T-cell (primary cell): ENCODE measurements at regions of chr12 and their contacts with region 1.

Region 1: DNA sequence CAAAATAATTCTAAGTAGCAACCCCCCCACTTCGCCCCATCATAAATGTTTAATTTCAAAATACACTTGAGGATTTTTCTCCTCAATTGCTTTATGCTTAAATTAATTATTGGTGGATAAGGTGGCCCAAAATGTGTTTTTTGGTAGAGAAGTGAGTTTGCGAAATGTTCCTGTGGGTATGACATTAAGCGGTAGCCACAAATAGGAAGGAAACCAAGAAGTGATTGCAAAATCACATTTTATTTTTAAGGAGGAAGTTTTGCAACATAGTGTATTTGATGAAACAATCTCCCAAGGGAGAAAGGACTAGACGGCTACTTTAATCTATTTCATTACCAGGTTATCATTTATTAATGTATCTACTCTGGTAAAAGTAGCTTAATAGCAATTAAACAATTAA is 25.5 kb downstream of the SLC25A3 start:
- DNase-seq: no peak
- ATAC-seq: no peak
- H3K4me3 ChIP-seq: no peak overlapping the region
- H3K4me3 Mint-ChIP-seq: no peak overlapping the region
- H3K27ac ChIP-seq: no peak overlapping the region
- H3K27ac Mint-ChIP-seq: no peak overlapping the region
- H3K4me1 ChIP-seq: no peaks in the 10 kb centered on the region
- H3K4me1 Mint-ChIP-seq: peaks cover 0 to 3% (median 0%) of the 10 kb centered on the region in 3 donors
- H3K27me3 ChIP-seq: no peaks in the 10 kb centered on the region
- H3K27me3 Mint-ChIP-seq: no peaks in the 10 kb centered on the region

Region 2: GRCh38 chr12:98544751-98545150 is 74.2 kb before region 1 on chr12:
- CTCF ChIA-PET with region 1: no interaction called
- POLR2A ChIA-PET with region 1: interaction called in 1 of 2 experiments, 10 read pairs
- DNase-seq: no peak
- ATAC-seq: no peak
- H3K4me3 ChIP-seq: no peak overlapping the region
- H3K4me3 Mint-ChIP-seq: no peak overlapping the region
- H3K27ac ChIP-seq: no peak overlapping the region
- H3K27ac Mint-ChIP-seq: no peak overlapping the region
- H3K4me1 ChIP-seq: no peaks in the 10 kb centered on the region
- H3K4me1 Mint-ChIP-seq: peaks cover 4 to 11% (median 5%) of the 10 kb centered on the region in 3 donors
- H3K27me3 ChIP-seq: no peaks in the 10 kb centered on the region
- H3K27me3 Mint-ChIP-seq: no peaks in the 10 kb centered on the region